Activated T-helper 2 cell treated with anti-CD3 and anti-CD28 coated beads, Interferon-gamma antibody, Interleukin-2, Interleukin-4, amounts not matched to agents 10 μg/mL and 5 μg/mL and 100 μg/mL, durations not matched to agents 14 hours and 24 hours and 36 hours (primary cell): ENCODE measurements at regions of chr22 and their contacts with region 1.

Region 1: GRCh38 chr22:17501679-17502285 is 61.5 kb upstream of the SLC25A18 start:
- DNase-seq: no peak
- H3K4me3 Mint-ChIP-seq: no peak overlapping the region
- H3K27ac Mint-ChIP-seq: no peak overlapping the region
- H3K4me1 Mint-ChIP-seq: no peaks in the 10 kb centered on the region
- H3K27me3 Mint-ChIP-seq: peaks cover 4% of the 10 kb centered on the region

Region 2: DNA sequence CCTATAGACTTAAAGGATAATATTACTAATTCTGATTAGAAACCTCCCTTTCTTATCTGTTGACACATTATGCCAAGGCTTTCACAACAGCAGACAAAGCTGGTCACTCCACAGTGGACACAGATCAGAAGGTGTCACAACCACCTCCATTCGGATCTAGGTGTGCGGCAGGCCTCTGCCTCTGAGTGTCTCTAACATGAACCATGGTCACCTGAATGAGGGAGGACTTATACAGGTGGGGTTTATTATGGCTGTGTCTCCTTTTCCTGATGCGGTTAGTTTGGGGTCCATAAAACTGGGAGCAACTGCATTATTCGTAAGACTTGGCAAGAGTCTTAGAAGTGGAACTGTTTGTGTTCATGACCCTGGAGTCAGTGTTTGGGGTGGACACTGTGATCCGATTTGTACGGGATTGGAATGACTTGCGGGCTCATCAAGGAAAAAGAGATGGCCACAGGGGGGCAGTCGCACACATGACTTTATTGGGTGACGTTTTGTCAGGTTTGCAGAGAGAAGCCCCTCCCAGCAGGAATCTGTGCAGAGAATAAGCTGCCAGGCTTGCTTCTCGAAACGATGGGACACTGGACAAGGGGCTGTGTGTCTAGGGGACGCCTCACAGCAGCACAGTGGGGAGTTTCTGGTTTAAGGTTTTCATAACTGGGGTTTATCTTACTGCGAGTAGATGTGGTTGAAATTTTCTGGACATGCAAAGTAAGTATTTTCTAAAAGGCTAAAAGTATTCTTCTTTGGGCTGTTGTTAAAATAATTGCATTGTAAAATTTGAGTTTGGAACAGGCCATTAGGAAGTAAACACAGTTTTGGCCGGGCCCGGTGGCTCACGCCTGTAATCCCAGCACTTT is 584.4 kb before region 1 on chr22:
- intact Hi-C with region 1: loop called (anchors 5 kb)
- DNase-seq: peak; percentile 38
- H3K4me3 Mint-ChIP-seq: no peak overlapping the region
- H3K27ac Mint-ChIP-seq: no peak overlapping the region
- H3K4me1 Mint-ChIP-seq: peaks cover 16% of the 10 kb centered on the region
- H3K27me3 Mint-ChIP-seq: peaks cover 2% of the 10 kb centered on the region

Region 3: GRCh38 chr22:17171313-17172171 is 330.2 kb before region 1 on chr22:
- intact Hi-C with region 1: loop called (anchors 1 kb)
- DNase-seq: peak; percentile 71
- H3K4me3 Mint-ChIP-seq: peak overlapping the region; percentile 79
- H3K27ac Mint-ChIP-seq: peak overlapping the region; percentile 50
- H3K4me1 Mint-ChIP-seq: peaks cover 2% of the 10 kb centered on the region
- H3K27me3 Mint-ChIP-seq: peaks cover 6% of the 10 kb centered on the region

Region 4: GRCh38 chr22:17470880-17471500 is 30.8 kb before region 1 on chr22:
- intact Hi-C with region 1: no loop called
- DNase-seq: no peak
- H3K4me3 Mint-ChIP-seq: no peak overlapping the region
- H3K27ac Mint-ChIP-seq: no peak overlapping the region
- H3K4me1 Mint-ChIP-seq: no peaks in the 10 kb centered on the region
- H3K27me3 Mint-ChIP-seq: peaks cover 9% of the 10 kb centered on the region

Region 5: DNA sequence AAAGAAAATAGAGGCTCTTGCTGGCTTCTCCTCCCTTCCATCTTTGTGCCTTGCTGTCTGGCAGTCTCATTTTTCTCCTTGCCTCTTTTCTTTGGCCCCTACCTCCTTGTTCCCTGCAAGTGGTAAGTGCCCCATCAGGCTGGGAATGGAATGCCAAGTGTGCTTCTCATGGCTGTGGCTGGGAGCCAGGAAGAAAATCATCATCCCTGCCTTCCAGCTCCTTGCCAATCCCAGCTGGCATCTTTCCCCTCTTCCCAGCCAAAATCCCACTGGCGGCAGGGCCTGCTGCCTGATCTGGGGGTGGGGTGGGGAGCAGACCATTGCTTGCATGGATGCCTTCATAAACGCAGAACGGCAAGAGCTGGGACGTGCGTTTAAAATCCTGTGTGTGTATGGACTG is 34.5 kb after region 1 on chr22:
- intact Hi-C with region 1: no loop called
- DNase-seq: no peak
- H3K4me3 Mint-ChIP-seq: no peak overlapping the region
- H3K27ac Mint-ChIP-seq: no peak overlapping the region
- H3K4me1 Mint-ChIP-seq: no peaks in the 10 kb centered on the region
- H3K27me3 Mint-ChIP-seq: peaks cover 4% of the 10 kb centered on the region